BJ (cell line): ENCODE measurements at regions of chr1 and their contacts with region 1.

Region 1: DNA sequence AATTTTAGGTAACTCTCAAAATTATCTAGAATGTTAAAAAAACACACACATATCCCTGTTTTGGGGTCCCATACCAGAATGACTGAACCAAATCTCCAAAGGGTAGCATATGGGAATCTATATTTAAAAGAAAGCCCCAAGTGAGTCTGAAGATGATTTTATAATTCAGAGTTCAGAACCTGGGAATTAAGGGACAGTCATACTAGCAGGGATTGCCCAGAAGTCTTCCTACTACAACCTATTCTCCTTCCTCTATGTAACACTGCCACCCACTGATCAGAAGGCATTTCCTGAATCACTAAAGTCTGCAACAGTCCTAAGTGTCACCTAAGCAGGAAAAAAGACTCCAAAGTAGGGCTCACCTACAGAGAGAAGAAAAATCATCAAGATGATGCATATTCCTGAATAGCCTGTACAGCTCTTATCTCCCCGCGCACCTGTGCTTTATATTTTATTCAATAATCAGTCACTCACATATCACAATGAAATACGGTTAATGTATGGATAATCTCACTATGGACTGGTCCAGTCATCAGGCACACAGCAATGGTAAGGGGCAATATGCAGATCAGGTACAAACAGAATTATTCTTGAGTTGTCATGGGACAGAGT is 4.9 kb downstream of the RGS1 start:
- DNase-seq: no peak
- H3K4me3 ChIP-seq: no peak overlapping the region
- H3K27me3 ChIP-seq: no peaks in the 10 kb centered on the region
- CTCF ChIP-seq: peak; percentile 47

Region 2: DNA sequence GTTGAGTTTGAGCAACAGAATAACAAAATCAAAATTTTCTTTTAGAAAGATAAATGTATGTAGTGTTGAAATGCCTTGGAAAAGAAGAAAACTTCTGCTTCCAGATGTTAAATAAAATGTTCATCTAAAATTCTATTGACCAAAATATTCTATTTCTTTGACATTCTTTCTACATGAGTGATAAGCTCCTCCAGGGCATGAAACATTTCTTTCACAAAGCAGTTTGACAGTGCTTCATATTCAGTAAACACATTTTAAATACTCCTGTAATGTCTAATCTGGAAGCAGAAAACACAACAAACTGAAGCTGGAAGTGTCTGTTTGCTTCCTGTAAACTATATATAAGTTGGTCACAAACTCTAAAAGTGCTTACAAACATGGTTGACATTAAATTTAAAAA is 202.2 kb before region 1 on chr1:
- CTCF ChIA-PET with region 1: no interaction called
- POLR2A ChIA-PET with region 1: no interaction called
- DNase-seq: no peak
- H3K4me3 ChIP-seq: no peak overlapping the region
- H3K27me3 ChIP-seq: no peaks in the 10 kb centered on the region
- CTCF ChIP-seq: no peak

Region 3: DNA sequence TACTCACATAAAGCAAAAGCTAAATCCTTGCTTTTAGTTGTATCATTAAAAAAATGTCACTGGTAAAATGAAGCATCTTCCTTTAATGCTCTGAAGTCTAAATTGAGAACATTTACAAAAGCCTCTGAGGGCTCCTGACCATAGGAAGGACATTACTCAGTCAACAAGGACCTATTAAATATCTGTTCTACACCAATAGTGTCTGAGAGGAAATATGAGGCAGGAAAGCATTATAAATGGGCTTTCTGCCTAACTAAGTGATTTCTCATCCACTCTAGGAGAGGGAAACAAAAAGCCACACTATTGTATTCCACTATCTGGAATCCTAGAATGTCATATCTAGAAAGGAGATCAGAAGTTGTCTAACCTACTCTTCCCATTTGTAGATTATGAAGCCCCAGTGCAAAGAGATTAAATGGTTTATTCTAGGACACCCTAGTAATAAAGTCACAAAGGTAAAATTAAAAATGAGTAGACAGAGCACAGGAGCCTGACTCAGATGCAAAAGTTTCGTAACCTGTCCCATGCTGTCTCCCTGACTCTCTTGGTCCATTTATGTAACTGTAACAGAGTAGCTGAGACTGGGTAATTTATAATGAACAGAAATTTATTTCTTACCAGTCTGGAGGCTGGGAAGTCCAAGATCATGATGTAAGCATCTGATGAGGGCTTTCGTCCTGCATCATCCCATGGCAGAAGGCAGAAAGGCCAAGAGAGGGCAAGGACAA is 12.7 kb after region 1 on chr1:
- CTCF ChIA-PET with region 1: interaction called, 14 read pairs
- POLR2A ChIA-PET with region 1: no interaction called
- DNase-seq: no peak
- H3K4me3 ChIP-seq: no peak overlapping the region
- H3K27me3 ChIP-seq: no peaks in the 10 kb centered on the region
- CTCF ChIP-seq: no peak